Activated T-helper 1 cell treated with anti-CD3 and anti-CD28 coated beads, Interleukin-12 subunit alpha, Interleukin-12 subunit beta, Interleukin-2, Interleukin-4 antibody, amounts not matched to agents 30 ng/mL and 10 ng/mL and 1 ng/mL, durations not matched to agents 14 hours and 24 hours and 36 hours (primary cell): ENCODE measurements at regions of chr19 and their contacts with region 1.

Region 1: DNA sequence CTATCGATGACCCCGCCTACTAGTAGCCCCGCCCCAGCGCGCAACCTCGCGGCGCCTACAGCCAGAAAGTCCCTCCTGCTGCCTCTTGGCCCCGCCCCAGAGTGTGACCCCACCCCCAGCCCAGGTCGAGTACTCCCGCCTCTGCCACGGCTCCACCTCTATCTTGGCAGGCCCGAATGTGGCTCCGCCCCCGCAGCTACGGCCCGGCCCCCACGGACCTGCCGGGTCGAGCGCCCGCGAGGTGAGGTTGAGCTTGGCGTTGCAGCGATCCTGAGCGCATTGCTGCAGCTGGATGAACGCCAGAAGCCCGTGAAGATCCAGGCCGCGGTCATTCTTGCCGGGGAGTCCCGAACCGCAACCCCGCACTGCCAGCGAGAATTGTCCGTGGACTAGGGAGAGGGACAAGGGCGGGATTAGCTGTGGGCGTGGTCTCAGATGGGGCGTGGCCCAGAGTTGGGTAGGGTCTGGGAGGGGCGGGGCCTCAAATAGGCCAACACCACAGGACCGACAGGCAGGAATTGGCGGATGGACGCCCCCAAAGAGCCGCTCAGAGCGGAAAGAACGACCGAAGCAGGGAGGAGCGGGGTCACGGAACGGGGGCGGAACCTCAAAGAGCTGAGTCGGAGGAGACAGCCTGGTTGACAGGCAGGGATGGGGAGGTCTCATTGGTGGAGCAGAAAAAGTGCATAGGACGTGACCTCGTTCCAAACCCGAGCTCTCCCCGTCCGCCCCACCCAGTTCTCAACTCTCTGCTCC is 1.8 kb downstream of the LYPD3 start:
- DNase-seq: peak; percentile 96
- H3K4me3 Mint-ChIP-seq: peak overlapping the region; percentile 92
- H3K27ac Mint-ChIP-seq: peak overlapping the region; percentile 90
- H3K4me1 Mint-ChIP-seq: peaks cover 45% of the 10 kb centered on the region
- H3K27me3 Mint-ChIP-seq: no peaks in the 10 kb centered on the region

Region 2: GRCh38 chr19:43290568-43291359 is 172.8 kb before region 1 on chr19:
- intact Hi-C with region 1: no loop called
- DNase-seq: no peak
- H3K4me3 Mint-ChIP-seq: no peak overlapping the region
- H3K27ac Mint-ChIP-seq: no peak overlapping the region
- H3K4me1 Mint-ChIP-seq: no peaks in the 10 kb centered on the region
- H3K27me3 Mint-ChIP-seq: no peaks in the 10 kb centered on the region

Region 3: GRCh38 chr19:43474986-43475705 is 11.6 kb after region 1 on chr19:
- intact Hi-C with region 1: loop called (anchors 1 kb)
- DNase-seq: peak; percentile 91
- H3K4me3 Mint-ChIP-seq: peak overlapping the region; percentile 77
- H3K27ac Mint-ChIP-seq: peak overlapping the region; percentile 89
- H3K4me1 Mint-ChIP-seq: peaks cover 14% of the 10 kb centered on the region
- H3K27me3 Mint-ChIP-seq: no peaks in the 10 kb centered on the region

Region 4: DNA sequence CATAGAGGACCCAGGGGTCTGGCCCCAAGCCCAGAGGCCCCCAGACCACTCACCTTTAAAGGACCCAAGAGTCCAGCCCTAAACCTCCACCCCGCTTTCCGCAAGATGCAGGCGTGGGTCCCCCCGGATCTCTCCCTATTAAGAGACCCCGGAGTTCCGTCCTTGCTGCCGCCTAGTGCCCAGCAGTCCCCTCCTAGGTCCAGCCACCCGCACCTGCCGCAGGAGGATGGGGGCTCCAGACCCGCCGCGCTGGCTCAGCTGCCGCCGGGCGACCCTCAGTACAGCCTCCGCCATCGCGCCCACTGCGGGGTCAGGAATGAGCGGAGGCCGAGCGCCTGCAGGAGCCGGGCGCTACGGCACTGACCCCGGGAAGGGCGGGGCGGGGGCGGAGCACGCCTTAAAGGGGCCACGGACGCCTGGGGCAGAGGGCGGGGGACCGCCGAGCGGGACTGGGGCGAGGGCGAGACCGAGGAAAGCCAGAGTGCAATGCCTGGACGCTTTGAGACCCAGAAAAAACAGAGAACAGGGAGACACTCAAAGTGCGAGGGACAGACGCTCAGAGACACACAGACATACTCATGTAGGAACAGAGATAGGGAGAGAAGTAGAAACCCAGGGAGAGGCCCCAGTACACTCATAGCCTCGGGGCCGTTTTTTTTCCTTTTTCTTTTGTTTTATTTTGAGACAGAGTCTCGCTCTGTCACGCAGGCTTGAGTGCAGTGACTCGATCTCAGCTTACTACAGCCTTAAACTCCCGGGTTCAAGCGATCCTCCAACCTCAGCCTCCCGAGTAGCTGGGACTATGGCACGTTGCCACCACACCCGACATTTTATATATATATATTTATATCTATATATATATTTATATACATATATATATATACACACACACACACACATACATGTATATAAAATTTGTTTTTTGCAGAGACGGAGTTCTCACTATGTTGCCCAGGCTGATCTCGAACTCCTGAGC is 63.6 kb after region 1 on chr19 and contains the start of gene ETHE1:
- intact Hi-C with region 1: loop called (anchors 1 kb)
- DNase-seq: peak; percentile 79
- H3K4me3 Mint-ChIP-seq: peak within 1 kb of the TSS; percentile 79
- H3K27ac Mint-ChIP-seq: peak within 1 kb of the TSS; percentile 77
- H3K4me1 Mint-ChIP-seq: peaks cover 32% of the 10 kb centered on the region
- H3K27me3 Mint-ChIP-seq: no peaks in the 10 kb centered on the region
- total RNA-seq, gene ETHE1: 55.1 and 55.4 TPM in 2 replicates

Region 5: DNA sequence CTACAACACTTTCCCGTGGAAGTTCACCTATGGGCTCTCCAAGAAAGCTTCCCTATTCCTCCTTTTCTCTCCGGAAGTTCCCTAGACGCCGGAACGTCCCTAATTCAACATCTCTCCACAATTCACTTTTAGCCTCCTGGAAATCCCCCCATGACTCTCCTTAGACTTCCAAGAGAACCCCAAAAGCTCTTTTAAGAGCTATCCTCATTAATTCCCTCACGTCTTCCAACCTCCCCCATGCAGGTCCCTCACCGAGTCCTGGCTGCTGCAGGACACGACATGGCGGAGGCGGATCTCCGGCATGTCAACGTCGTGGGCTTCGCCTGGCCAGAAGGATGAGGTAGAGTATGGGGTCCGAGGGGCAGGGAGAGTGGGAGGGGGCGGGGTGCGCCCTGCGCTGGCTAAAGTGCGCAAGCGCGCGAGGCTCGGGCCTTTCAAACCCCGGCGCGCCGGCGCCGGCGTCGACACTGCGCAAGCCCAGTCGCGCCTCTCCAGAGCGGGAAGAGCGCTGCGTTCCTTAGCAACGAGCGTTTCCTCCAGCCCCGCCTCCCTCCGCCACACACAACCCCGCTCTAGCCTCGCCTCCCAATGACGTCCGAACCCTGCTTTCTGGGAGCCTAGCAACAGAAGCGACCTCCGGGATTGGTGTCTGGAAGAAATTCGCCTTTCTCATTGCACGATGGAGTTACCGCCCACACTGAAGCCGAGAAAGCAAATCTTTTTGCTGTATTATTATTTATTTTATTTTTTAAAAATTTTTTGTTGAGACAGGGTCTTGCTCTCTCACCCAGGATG is 111.8 kb after region 1 on chr19 and contains the starts of genes PINLYP and XRCC1:
- intact Hi-C with region 1: loop called (anchors 1 kb)
- DNase-seq: peak; percentile 95
- H3K4me3 Mint-ChIP-seq: peak within 1 kb of the TSS; percentile 96
- H3K27ac Mint-ChIP-seq: peak within 1 kb of the TSS; percentile 91
- H3K4me1 Mint-ChIP-seq: peaks cover 25% of the 10 kb centered on the region
- H3K27me3 Mint-ChIP-seq: peaks cover 3% of the 10 kb centered on the region
- total RNA-seq, gene PINLYP: 4.9 and 5.7 TPM in 2 replicates
- total RNA-seq, gene XRCC1: 27.4 and 28.7 TPM in 2 replicates

Region 6: GRCh38 chr19:43619262-43620060 is 155.9 kb after region 1 on chr19 and contains the start of gene ZNF428:
- intact Hi-C with region 1: loop called (anchors 1 kb)
- DNase-seq: peak; percentile 86
- H3K4me3 Mint-ChIP-seq: peak within 1 kb of the TSS; percentile 98
- H3K27ac Mint-ChIP-seq: peak within 1 kb of the TSS; percentile 99
- H3K4me1 Mint-ChIP-seq: peaks cover 23% of the 10 kb centered on the region
- H3K27me3 Mint-ChIP-seq: no peaks in the 10 kb centered on the region
- total RNA-seq, gene ZNF428: 17.9 and 20.3 TPM in 2 replicates

Region 7: GRCh38 chr19:43754503-43755255 is 291.1 kb after region 1 on chr19 and contains the start of gene SMG9:
- intact Hi-C with region 1: loop called (anchors 1 kb)
- DNase-seq: peak; percentile 99
- H3K4me3 Mint-ChIP-seq: peak within 1 kb of the TSS; percentile 98
- H3K27ac Mint-ChIP-seq: peak within 1 kb of the TSS; percentile 100
- H3K4me1 Mint-ChIP-seq: peaks cover 57% of the 10 kb centered on the region
- H3K27me3 Mint-ChIP-seq: peaks cover 2% of the 10 kb centered on the region
- total RNA-seq, gene SMG9: 86.6 and 89.2 TPM in 2 replicates